ENCODE measurements at regions of chr17 and their contacts with region 1.

Region 1: GRCh38 chr17:57995076-57995956 is 7.3 kb upstream of the VEZF1 start:
- H3K4me3 ChIP-seq: no peak overlapping the region
- H3K27ac ChIP-seq: no peak overlapping the region
- H3K4me1 ChIP-seq: peaks cover 3% of the 10 kb centered on the region; the same call in 1 of the 2 replicates
- CTCF ChIP-seq: peak; percentile 55

Region 2: GRCh38 chr17:57685505-57686132 is 309.7 kb before region 1 on chr17:
- CTCF ChIA-PET with region 1: no interaction called
- POLR2A ChIA-PET with region 1: no interaction called
- H3K4me3 ChIP-seq: no peak overlapping the region
- H3K27ac ChIP-seq: no peak overlapping the region
- H3K4me1 ChIP-seq: no peaks in the 10 kb centered on the region
- CTCF ChIP-seq: no peak

Region 3: DNA sequence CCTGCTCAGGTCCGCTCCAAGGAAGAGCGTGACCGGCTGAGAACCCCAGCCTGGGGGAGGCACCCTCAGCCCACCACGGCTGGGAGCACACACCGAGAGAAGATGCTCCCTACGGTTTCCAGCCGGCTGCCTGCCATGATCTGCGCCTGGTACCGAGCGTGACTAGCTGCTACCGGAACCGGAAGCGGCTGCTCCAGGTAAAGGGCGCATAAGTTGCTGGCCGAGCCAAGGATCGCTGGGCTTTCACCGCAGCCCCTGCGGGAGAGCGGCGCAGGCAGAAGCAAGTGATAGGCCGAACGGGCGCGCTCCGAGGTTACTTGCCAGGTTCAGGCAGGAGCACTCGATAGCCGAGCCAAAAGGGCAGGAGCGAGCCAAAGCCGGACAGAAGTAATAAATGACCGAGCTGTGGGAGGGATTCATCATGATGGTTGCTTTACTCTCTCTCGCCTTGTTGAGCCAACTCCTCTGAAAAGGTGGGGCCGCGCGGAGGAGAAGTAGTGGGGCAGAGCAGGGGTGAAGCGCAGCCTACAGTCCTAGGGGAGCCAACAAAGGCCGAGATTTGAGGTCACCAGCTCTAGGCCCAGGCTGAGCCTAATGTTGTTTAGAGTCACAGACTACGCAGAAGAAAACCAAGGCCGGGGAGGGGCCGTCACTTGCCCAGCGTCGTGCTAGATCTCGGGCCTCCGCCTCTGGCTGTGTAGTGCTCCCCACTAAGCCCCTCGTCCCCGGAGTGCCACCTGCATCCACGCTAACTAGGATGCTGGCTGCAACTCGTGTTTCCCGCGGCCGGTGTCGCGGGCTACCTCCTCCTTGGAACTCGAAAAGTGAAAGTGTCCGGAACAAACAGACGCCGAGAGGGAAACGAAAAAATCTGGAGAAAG is 145.2 kb before region 1 on chr17 and contains the start of gene MRPS23:
- CTCF ChIA-PET with region 1: interaction called, 434 read pairs
- POLR2A ChIA-PET with region 1: interaction called, 30 read pairs
- H3K4me3 ChIP-seq: peak within 1 kb of the TSS; percentile 99
- H3K27ac ChIP-seq: peak within 1 kb of the TSS; percentile 84
- H3K4me1 ChIP-seq: peaks cover 17% of the 10 kb centered on the region
- CTCF ChIP-seq: no peak

Region 4: GRCh38 chr17:57875309-57876115 is 119.8 kb before region 1 on chr17:
- CTCF ChIA-PET with region 1: interaction called, 38 read pairs
- POLR2A ChIA-PET with region 1: interaction called, 15 read pairs
- H3K4me3 ChIP-seq: no peak overlapping the region
- H3K27ac ChIP-seq: peak overlapping the region; percentile 87
- H3K4me1 ChIP-seq: peaks cover 21% of the 10 kb centered on the region
- CTCF ChIP-seq: peak; percentile 65

Region 5: GRCh38 chr17:57955183-57955931 is 40.0 kb before region 1 on chr17 and contains the start of gene CUEDC1:
- CTCF ChIA-PET with region 1: interaction called, 16 read pairs
- POLR2A ChIA-PET with region 1: interaction called, 5 read pairs
- H3K4me3 ChIP-seq: peak within 1 kb of the TSS; percentile 52
- H3K27ac ChIP-seq: peak within 1 kb of the TSS; percentile 98
- H3K4me1 ChIP-seq: peaks cover 40% of the 10 kb centered on the region
- CTCF ChIP-seq: no peak

Region 6: GRCh38 chr17:58006924-58007780 is 11.8 kb after region 1 on chr17 and contains the start of gene SRSF1:
- CTCF ChIA-PET with region 1: interaction called, 9 read pairs
- POLR2A ChIA-PET with region 1: interaction called, 60 read pairs
- H3K4me3 ChIP-seq: peak within 1 kb of the TSS; percentile 94
- H3K27ac ChIP-seq: peak within 1 kb of the TSS; percentile 100
- H3K4me1 ChIP-seq: peaks cover 22% of the 10 kb centered on the region
- CTCF ChIP-seq: no peak

Region 7: DNA sequence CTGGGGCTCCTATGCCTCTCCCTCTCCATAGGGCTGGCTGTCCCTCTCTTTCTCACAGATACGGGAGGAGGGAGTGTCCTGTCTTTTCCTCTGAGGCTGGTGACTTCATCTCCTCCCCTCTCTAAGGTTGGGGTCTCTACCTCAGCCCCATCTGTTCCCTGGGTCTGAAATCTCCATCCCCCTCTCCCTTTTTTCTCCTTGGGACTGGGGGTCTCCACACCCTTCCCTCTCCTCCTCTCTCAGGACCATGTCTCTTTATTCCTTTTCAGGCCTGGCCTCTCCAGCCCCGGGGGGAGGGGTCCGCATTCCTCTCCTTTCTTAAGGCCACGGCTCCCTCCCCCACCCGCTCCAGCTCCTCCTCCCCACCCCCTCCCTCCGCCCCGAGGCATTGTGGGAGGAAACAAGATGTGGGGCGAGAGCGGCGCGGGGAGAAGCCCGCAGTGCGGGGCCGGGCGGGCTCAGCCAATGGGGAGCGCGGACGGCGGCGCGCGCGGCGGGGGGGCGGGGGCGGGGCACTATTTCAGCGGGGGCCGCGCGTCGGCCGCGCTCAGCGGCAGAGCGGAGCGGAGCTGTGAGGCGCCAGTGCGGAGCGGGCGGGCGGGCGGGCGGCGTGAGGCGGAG is 87.7 kb after region 1 on chr17 and contains the start of gene DYNLL2:
- CTCF ChIA-PET with region 1: interaction called, 3 read pairs
- POLR2A ChIA-PET with region 1: interaction called, 10 read pairs
- H3K4me3 ChIP-seq: peak within 1 kb of the TSS; percentile 91
- H3K27ac ChIP-seq: peak within 1 kb of the TSS; percentile 90
- H3K4me1 ChIP-seq: peaks cover 19% of the 10 kb centered on the region
- CTCF ChIP-seq: no peak

Region 8: DNA sequence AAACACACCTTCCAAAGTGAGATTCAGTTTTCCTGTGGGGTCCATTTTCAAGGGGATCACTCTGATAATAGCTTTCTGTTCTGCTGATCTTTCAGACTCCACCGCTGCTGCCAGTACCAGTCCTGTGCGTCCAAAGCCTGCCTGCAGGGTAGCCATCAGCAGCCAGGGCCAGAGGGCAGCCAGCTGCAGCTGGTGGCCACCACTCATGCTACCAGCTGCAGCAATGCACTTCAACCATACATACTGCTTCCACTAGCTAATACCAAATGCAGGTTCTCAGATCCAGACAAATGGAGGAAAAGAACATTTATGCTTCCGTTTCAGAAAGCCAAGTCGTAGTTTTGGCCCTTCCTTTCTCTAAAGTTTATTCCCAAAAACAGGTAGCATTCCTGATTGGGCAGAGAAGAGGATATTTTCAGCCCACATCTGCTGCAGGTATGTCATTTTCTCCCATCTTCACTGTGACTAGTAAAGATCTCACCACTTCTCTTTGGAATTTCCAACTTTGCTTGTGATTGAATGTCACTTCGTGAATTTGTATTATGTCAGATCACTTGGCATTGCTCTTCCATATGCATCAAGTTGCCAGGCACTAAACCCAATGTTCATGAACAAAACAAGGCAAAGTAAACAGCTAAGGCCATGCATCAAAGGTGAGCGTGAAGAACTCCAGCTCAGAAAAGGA is 420.2 kb after region 1 on chr17:
- CTCF ChIA-PET with region 1: no interaction called
- POLR2A ChIA-PET with region 1: no interaction called
- H3K4me3 ChIP-seq: peak overlapping the region; percentile 52
- H3K27ac ChIP-seq: peak overlapping the region; percentile 89
- H3K4me1 ChIP-seq: peaks cover 28% of the 10 kb centered on the region
- CTCF ChIP-seq: peak; percentile 35; the same call in 1 of the 2 replicates

Measured in HEK293 (cell line).